Activated CD4-positive, alpha-beta memory T cell treated with anti-CD3 and anti-CD28 coated beads for 36 hours (primary cell): ENCODE measurements at regions of chr4 and their contacts with region 1.

Region 1: GRCh38 chr4:87006676-87007527 is 72.1 kb downstream of the AFF1 start:
- DNase-seq: peak; percentile 90
- H3K4me3 Mint-ChIP-seq: peak overlapping the region; percentile 91
- H3K27ac Mint-ChIP-seq: peak overlapping the region; percentile 97
- H3K4me1 Mint-ChIP-seq: peaks cover 48% of the 10 kb centered on the region
- H3K27me3 Mint-ChIP-seq: no peaks in the 10 kb centered on the region

Region 2: DNA sequence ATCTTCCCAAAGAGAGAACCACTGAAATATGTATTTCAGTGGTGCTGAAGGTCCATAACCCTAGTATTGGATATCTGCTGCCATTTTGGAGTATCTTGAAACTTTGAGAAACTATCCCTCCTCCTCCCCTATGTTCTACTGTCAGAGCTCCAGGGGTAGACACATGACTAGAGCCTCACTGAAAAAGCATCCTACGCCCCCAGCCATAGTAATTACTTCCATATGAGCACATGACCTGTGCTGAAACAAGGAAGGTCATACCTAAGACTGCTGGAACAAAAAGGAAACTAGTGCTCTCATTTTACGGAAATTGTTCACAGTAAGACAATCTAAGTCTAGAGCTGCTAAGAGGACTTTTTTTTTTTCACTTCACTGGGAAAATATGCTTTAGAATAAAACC is 605.1 kb before region 1 on chr4:
- CTCF ChIA-PET with region 1: no interaction called
- POLR2A ChIA-PET with region 1: no interaction called
- intact Hi-C with region 1: no loop called
- DNase-seq: no peak
- H3K4me3 Mint-ChIP-seq: no peak overlapping the region
- H3K27ac Mint-ChIP-seq: no peak overlapping the region
- H3K4me1 Mint-ChIP-seq: no peaks in the 10 kb centered on the region
- H3K27me3 Mint-ChIP-seq: no peaks in the 10 kb centered on the region

Region 3: GRCh38 chr4:86957214-86957613 is 49.7 kb before region 1 on chr4:
- CTCF ChIA-PET with region 1: no interaction called
- POLR2A ChIA-PET with region 1: interaction called, 3 read pairs
- intact Hi-C with region 1: loop called (anchors 5 kb)
- DNase-seq: no peak
- H3K4me3 Mint-ChIP-seq: no peak overlapping the region
- H3K27ac Mint-ChIP-seq: peak overlapping the region; percentile 55
- H3K4me1 Mint-ChIP-seq: peaks cover 49% of the 10 kb centered on the region
- H3K27me3 Mint-ChIP-seq: no peaks in the 10 kb centered on the region

Region 4: DNA sequence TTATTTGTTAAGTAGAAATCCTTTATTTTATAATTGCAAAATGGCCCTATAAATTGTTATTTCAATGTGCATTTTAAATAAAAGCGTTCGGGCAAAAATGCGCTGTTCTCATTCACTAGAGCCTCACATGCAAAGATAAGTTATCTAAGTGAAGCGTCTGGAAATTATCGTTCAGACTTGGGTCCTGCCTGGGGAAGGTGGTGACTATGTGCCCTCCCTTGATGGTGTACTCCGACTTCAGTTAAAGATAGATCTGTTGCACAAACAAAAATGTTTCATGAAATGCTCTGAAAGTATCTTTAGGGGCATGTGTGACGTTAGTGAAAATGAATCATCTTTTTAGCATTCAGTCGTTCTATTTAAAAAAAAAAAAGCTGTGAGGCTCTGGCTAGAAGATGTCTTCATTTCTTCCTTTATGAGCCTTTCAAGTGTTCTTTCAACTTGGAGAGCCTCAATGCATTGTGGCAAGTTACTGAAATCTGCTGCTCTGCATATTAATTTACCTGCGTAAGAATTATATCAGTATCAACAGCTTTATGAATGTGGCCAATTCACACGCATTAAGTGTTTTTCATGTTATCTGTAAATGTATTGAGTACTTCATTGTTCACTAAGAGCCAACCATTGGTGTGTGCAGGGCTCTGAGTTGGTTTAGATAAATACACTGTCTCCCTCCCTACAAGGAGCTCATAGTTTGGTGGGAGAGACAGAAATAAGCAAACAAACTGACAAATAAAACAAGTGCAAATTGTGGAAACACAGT is 10.9 kb after region 1 on chr4:
- CTCF ChIA-PET with region 1: no interaction called
- POLR2A ChIA-PET with region 1: interaction called, 5 read pairs
- intact Hi-C with region 1: loop called (anchors 1 kb)
- DNase-seq: no peak
- H3K4me3 Mint-ChIP-seq: no peak overlapping the region
- H3K27ac Mint-ChIP-seq: peak overlapping the region; percentile 35
- H3K4me1 Mint-ChIP-seq: peaks cover 73% of the 10 kb centered on the region
- H3K27me3 Mint-ChIP-seq: no peaks in the 10 kb centered on the region

Region 5: DNA sequence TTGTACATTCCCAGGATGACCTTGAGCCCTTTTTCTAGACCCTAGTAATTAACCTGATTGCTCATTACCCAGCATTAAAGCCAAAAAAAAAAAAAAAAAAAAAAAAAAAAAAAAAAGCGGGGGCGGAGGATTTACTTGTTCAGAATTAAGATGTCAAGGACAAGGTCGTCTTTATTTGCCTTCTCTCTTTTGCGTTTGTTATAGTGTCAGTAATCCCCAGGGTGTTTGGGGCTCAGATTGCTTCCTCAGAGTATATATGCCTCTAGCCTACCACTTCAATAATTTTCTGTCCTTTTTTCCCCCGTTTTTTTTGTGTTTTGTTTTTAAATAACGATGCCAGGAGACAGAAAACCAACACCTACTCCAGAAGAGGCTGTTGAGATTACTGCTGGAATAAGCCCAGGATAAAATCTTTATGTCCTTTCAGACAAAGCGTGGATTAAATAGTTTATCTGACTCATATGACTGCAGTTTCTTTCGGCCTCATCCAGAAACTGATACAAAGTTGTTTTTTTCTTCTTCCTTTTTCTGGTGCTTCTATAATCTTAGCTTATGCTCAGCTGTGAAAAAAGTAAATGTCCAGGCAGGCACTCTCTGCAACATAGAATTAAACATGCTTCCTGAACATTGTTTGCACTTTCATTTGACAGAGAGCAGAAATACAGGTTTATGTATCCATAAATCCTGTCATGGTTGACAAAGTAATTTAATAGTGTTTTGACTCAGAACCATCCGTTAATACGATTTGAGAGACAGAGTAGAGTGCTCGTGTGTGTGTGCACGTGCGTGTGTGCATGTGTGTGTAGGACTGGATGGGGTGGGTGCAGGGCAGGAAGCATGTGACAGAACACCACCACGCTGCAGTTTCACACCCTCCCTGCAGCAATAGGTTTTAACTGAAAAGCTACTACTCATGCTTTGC is 66.6 kb after region 1 on chr4:
- CTCF ChIA-PET with region 1: interaction called, 3 read pairs
- POLR2A ChIA-PET with region 1: interaction called, 5 read pairs
- intact Hi-C with region 1: loop called (anchors 1 kb)
- DNase-seq: peak; percentile 80
- H3K4me3 Mint-ChIP-seq: peak overlapping the region; percentile 54
- H3K27ac Mint-ChIP-seq: peak overlapping the region; percentile 71
- H3K4me1 Mint-ChIP-seq: peaks cover 49% of the 10 kb centered on the region
- H3K27me3 Mint-ChIP-seq: no peaks in the 10 kb centered on the region

Region 6: DNA sequence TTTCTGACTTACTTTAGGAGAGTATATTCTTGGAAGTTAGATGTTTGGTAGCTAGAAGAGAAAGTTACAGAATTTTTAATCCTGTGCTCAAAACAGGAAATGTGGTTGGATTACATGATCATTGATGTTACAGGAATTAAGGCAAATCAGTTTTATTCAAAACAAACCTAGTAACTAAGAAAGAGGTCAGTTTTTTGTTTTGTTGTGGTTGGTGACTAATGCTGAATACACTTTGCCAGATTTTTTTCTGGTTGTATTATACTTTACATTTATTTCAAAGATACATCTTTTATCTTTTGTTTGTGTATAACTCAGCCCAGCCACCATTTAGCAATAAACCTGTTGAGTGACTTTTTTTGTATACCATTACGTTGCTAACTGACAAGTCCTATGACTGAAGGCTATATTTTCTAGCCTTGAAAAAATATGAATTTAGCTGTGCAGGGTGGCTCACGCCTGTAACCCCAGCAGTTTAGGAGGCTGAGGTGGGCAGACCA is 96.8 kb after region 1 on chr4:
- CTCF ChIA-PET with region 1: no interaction called
- POLR2A ChIA-PET with region 1: interaction called, 5 read pairs
- intact Hi-C with region 1: loop called (anchors 1 kb)
- DNase-seq: no peak
- H3K4me3 Mint-ChIP-seq: peak overlapping the region; percentile 57
- H3K27ac Mint-ChIP-seq: peak overlapping the region; percentile 84
- H3K4me1 Mint-ChIP-seq: peaks cover 72% of the 10 kb centered on the region
- H3K27me3 Mint-ChIP-seq: no peaks in the 10 kb centered on the region

Region 7: DNA sequence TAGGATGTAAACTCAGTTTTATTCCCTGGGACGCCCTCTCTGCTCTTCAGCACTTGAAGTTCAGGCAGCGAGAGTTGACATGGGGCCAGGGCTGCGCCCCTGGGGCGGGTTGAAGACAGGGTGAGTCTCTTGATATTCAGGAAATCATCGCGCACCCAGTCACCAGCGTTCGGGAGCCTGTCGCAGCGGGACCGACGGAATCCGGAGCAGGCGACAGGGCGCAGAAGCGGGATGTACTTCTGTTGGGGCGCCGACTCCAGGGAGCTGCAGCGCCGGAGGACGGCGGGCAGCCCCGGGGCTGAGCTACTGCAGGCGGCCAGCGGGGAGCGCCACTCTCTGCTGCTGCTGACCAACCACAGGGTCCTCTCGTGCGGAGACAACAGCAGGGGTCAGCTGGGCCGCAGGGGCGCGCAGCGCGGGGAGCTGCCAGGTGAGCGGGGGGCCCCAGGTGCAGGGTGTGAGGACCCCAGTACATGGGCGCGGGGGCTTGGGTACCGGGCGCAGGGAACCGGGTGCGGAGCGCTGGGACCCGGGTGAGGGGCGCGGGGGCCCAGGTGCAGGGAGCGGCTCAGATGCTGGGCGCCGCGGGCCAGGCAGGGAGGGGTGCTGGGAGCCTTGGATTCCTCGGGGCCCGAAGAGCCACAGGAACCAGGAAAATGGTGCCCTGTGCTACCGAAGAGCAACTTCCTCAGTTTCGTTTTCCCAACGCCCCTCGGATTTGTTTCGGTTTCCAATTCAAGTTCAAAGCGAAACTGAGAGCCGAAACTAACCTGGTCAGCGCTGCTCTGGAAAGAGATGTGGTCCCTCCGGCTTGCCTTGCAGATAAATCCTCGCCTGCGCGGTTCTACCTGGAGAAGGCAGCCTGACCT is 1372.0 kb after region 1 on chr4 and contains the start of gene HERC6:
- CTCF ChIA-PET with region 1: no interaction called
- POLR2A ChIA-PET with region 1: no interaction called
- intact Hi-C with region 1: loop called (anchors 5 kb)
- DNase-seq: peak; percentile 86
- H3K4me3 Mint-ChIP-seq: peak within 1 kb of the TSS; percentile 83
- H3K27ac Mint-ChIP-seq: peak within 1 kb of the TSS; percentile 85
- H3K4me1 Mint-ChIP-seq: peaks cover 49% of the 10 kb centered on the region
- H3K27me3 Mint-ChIP-seq: no peaks in the 10 kb centered on the region
- total RNA-seq, gene HERC6: 12.4 to 12.5 TPM